ENCODE measurements at regions of chr15 and their contacts with region 1.

Region 1: GRCh38 chr15:47717036-47717611 is at the start of gene SEMA6D:
- DNase-seq: peak; percentile 82 to 91
- ATAC-seq: peak; percentile 90
- H3K4me3 ChIP-seq: peak within 1 kb of the TSS; percentile 84 to 99
- H3K27ac ChIP-seq: peak within 1 kb of the TSS; percentile 62 to 88
- H3K4me1 ChIP-seq: peaks cover 6 to 7% of the 10 kb centered on the region in 2 donors
- H3K27me3 ChIP-seq: no peaks in the 10 kb centered on the region
- total RNA-seq, gene SEMA6D: 9.0 to 22.7 TPM

Region 2: DNA sequence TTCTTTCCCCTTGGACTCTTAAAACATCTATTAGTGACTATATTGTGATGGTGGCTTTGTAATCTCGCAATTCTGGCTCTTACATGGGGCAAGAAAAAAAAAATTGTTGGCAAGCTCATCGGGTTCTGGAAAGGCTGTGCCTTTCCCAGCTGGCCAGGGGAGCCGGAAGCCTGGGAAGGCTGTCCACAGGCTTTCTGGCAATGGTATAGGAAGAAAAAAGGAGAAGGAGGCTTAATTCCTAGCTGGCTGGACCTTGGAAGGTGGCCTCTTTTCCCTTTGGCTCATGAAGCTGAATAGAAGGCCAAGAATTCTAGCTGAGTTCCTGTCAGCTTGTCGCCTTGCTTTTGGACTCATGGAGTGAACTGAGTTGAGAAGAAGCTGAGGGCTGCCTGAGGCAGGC is 243.3 kb before region 1 on chr15:
- intact Hi-C with region 1: loop called (anchors 10 kb)
- DNase-seq: peak; percentile 76 to 82
- ATAC-seq: peak; percentile 93
- H3K4me3 ChIP-seq: no peak overlapping the region
- H3K27ac ChIP-seq: peak overlapping the region in 1 of 2 donors; percentile 76
- H3K4me1 ChIP-seq: peaks cover 0 to 19% of the 10 kb centered on the region in 2 donors
- H3K27me3 ChIP-seq: no peaks in the 10 kb centered on the region

Region 3: GRCh38 chr15:47542312-47542989 is 174.7 kb before region 1 on chr15:
- intact Hi-C with region 1: no loop called
- DNase-seq: no peak
- ATAC-seq: no peak
- H3K4me3 ChIP-seq: no peak overlapping the region
- H3K27ac ChIP-seq: no peak overlapping the region
- H3K4me1 ChIP-seq: no peaks in the 10 kb centered on the region
- H3K27me3 ChIP-seq: no peaks in the 10 kb centered on the region

Region 4: DNA sequence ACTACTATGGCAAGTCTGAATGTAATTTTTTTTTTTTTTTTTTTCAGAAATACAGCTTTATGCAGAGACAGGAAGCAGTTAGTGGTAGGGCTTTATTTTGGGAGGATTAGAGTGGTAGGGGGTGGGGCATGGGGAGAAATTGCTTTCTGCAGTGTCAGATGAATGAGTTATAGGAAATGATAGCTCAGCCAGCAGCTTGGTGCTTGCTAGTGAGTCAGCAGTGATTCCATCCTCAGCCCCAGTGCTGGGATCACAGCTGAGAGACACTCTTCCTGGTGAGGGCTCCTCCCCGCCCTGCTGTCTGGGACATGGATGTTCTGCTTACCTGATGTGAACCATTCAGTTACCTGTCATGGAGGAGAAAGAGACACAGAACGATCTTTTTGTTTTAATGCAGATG is 39.7 kb after region 1 on chr15:
- intact Hi-C with region 1: loop called in 1 of 2 experiments (anchors 2 kb)
- DNase-seq: peak in 1 of 2 donors; percentile 60
- ATAC-seq: peak; percentile 63
- H3K4me3 ChIP-seq: no peak overlapping the region
- H3K27ac ChIP-seq: no peak overlapping the region
- H3K4me1 ChIP-seq: no peaks in the 10 kb centered on the region
- H3K27me3 ChIP-seq: no peaks in the 10 kb centered on the region

Region 5: DNA sequence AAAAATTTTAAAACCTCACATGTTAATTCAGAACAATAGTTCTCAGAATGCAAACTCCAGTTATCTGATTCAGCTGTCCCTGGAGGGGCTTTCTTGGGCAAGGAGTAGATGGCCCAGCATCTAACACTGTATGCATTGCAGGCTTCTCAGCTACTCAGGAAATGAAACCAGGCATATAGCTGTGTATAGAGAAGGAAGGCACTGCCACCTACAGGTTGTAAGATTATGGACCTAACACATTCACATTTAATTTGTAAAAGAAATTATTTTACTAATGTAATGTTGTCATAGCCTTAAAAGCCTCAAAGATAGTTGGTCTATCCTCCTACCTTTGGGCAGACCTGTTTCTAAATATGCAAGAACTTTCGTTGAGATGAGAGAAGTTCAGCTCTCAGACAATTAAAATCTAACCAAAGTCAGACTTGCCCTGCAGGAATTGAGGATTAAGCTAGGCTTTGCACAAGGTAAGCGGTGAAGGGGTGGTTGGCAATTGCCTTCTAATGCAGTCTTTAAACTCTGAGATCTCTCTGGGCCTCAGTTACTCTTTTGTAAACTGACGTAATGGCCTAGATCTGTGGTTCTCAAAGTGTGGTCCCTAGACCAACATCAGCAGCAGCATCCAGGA is 270.9 kb after region 1 on chr15:
- intact Hi-C with region 1: loop called in 1 of 2 experiments (anchors 5 kb)
- DNase-seq: no peak
- ATAC-seq: peak; percentile 87
- H3K4me3 ChIP-seq: no peak overlapping the region
- H3K27ac ChIP-seq: no peak overlapping the region
- H3K4me1 ChIP-seq: no peaks in the 10 kb centered on the region
- H3K27me3 ChIP-seq: no peaks in the 10 kb centered on the region

Region 6: DNA sequence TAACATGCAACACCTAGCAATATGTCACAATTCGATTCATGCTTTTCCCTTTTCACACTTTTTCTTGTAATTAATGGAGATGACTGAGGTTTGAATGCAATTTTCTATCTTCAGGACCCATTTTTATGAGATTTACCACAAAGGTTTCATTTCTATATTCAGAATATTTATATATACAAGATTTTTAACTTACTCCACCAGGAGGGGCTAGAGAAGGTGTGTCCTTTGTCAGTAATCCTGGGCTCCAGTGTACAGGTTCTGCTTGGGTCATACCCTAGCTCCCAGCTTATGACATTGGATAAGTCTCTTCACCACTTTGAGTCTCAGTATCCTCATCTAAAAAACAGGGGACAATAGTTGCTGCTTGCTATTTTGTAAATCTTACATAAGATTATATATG is 308.0 kb after region 1 on chr15:
- intact Hi-C with region 1: no loop called
- DNase-seq: no peak
- ATAC-seq: no peak
- H3K4me3 ChIP-seq: no peak overlapping the region
- H3K27ac ChIP-seq: no peak overlapping the region
- H3K4me1 ChIP-seq: no peaks in the 10 kb centered on the region
- H3K27me3 ChIP-seq: no peaks in the 10 kb centered on the region